ENCODE measurements at regions of chr6 and their contacts with region 1.

Region 1: GRCh38 chr6:25556516-25556915 is 95.5 kb upstream of the SCGN start:
- DNase-seq: peak; percentile 91

Region 2: GRCh38 chr6:24283043-24283985 is 1273.2 kb before region 1 on chr6:
- intact Hi-C with region 1: loop called in 1 of 2 experiments (anchors 10 kb)
- DNase-seq: peak; percentile 83